ENCODE measurements at regions of chr19 and their contacts with region 1.

Region 1: DNA sequence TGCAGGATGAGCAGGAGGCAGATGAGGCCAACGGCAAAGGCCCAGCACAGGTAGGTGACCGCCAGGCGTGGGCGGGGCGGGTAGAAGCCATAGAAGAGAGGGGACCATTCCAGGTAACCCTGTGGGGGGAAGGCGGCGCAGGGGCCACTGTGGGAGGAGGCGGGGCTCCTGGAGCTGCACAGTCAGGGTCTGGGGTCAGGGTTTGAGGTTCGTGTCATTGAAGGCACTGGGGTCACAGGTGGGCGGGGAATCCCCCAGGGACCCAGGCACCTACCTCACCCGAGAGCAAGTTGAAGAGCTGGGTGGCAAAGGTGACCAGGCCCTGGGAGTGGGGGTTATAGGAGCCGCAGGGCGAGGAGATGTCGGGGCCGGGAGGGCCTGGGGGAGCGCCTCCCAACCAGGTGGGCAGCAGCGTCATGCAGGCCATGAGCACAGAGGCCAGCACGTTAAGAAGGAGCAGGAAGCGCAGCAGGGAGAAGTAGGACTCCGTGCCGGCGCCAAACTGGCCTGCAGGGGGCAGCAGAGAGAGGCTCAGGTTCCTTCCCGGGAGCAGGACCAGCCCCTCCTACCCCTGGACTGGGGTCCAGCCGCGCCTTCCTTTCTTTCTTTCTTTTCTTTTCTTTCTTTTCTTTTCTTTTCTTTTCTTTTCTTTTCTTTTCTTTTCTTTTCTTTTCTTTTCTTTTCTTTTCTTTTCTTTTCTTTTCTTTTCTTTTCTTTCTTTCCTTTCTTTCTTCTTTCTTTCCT is 4.6 kb downstream of the TMC4 start:
- DNase-seq: peak; percentile 82 to 98 (median 94)

Region 2: DNA sequence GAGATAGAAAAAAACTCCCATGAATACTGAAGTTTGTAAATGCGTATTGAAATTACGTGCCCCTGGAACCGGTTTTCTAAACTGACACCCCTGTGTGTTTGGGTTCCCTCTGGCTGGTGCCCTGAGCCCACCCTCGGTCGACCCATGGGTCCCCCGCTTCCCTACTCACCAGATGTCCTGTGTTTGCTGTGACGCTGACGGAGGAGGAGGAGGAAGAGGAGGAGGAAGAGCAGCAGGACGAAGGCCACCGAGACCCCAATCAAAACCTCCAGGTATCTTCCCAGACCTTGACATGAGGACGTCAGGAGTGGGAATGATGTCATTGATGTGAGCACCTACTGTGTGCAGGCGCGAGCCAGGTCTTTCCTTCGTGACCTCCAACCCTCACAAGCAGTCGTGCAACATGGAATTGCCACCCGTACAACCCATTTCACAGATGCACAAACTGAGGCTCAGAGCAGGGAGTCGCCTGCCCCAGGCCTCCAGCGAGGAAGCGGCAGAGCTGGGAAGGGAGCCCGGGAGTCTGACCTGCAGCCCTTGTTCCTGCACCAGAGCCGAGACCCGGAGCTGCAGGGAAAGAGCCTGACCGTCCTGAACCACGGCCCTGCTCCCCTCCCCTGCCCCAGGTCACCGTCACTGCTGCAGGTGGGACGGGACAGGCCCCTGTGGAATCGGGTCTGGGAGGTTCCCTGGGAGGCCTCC is 50.8 kb after region 1 on chr19:
- intact Hi-C with region 1: no loop called
- DNase-seq: no peak

Region 3: GRCh38 chr19:54231077-54231931 is 63.0 kb after region 1 on chr19:
- intact Hi-C with region 1: loop called (anchors 5 kb)
- DNase-seq: peak; percentile 74 to 96 (median 91)